Activated naive CD4-positive, alpha-beta T cell treated with anti-CD3 and anti-CD28 coated beads for 36 hours (primary cell): ENCODE measurements at regions of chr12 and their contacts with region 1.

Region 1: GRCh38 chr12:795305-795704 is 42.9 kb downstream of the WNK1 start:
- DNase-seq: peak; percentile 83
- H3K4me3 Mint-ChIP-seq: peak overlapping the region; percentile 31
- H3K27ac Mint-ChIP-seq: peak overlapping the region; percentile 88
- H3K4me1 Mint-ChIP-seq: peaks cover 77% of the 10 kb centered on the region
- H3K27me3 Mint-ChIP-seq: no peaks in the 10 kb centered on the region

Region 2: DNA sequence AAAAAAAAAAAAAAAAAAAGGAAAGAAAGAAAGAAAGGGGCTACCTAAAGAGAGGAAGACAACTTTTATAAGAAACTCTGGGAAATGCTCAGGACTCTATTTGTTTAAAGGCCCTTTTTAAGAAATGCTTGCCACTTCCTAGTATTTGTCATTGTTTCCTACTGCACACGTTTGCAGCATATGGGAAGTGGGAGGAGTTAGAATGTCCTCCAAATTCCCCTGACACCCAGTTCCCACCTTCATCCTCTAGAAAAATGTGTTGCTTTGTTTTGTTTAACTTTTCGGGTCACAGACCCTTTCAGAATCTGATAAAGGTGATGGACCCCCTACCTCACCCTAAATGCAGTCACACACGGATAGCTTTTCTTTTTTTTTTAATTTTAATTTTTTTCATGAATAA is 172.9 kb before region 1 on chr12:
- CTCF ChIA-PET with region 1: no interaction called
- intact Hi-C with region 1: loop called (anchors 1 kb)
- DNase-seq: peak; percentile 57
- H3K4me3 Mint-ChIP-seq: peak overlapping the region; percentile 10
- H3K27ac Mint-ChIP-seq: peak overlapping the region; percentile 81
- H3K4me1 Mint-ChIP-seq: peaks cover 43% of the 10 kb centered on the region
- H3K27me3 Mint-ChIP-seq: no peaks in the 10 kb centered on the region

Region 3: GRCh38 chr12:761256-761655 is 34.0 kb before region 1 on chr12:
- CTCF ChIA-PET with region 1: no interaction called
- intact Hi-C with region 1: loop called (anchors 1 kb)
- DNase-seq: no peak
- H3K4me3 Mint-ChIP-seq: no peak overlapping the region
- H3K27ac Mint-ChIP-seq: no peak overlapping the region
- H3K4me1 Mint-ChIP-seq: peaks cover 66% of the 10 kb centered on the region
- H3K27me3 Mint-ChIP-seq: no peaks in the 10 kb centered on the region

Region 4: DNA sequence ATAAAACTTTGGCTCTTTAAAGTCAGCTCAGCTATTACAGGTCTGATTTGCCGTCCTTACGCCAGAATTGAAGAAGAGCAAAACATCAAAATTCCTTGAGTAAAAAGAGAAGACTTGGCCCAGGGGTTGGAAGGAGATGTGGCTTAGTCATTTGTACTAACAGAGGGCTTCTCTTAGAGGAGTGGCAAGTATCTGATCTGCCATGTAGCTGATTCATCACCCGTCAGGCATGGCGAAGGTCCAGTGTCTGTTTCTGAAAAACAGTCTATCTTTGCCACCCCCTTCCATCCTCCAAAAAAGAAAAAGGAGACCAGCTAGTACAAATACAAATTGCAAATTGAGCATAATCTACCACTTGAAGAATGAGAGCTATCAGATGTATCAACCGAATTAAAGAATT is 62.3 kb after region 1 on chr12:
- CTCF ChIA-PET with region 1: no interaction called
- intact Hi-C with region 1: no loop called
- DNase-seq: no peak
- H3K4me3 Mint-ChIP-seq: no peak overlapping the region
- H3K27ac Mint-ChIP-seq: no peak overlapping the region
- H3K4me1 Mint-ChIP-seq: peaks cover 8% of the 10 kb centered on the region
- H3K27me3 Mint-ChIP-seq: no peaks in the 10 kb centered on the region

Region 5: GRCh38 chr12:1279050-1279449 is 483.7 kb after region 1 on chr12:
- CTCF ChIA-PET with region 1: no interaction called
- intact Hi-C with region 1: no loop called
- DNase-seq: no peak
- H3K4me3 Mint-ChIP-seq: no peak overlapping the region
- H3K27ac Mint-ChIP-seq: no peak overlapping the region
- H3K4me1 Mint-ChIP-seq: peaks cover 9% of the 10 kb centered on the region
- H3K27me3 Mint-ChIP-seq: no peaks in the 10 kb centered on the region